ENCODE measurements at regions of chr9 and their contacts with region 1.

Region 1: GRCh38 chr9:87148331-87149104 is 201.2 kb upstream of the GAS1 start:
- DNase-seq: peak; percentile 93
- ATAC-seq: peak; percentile 97

Region 2: DNA sequence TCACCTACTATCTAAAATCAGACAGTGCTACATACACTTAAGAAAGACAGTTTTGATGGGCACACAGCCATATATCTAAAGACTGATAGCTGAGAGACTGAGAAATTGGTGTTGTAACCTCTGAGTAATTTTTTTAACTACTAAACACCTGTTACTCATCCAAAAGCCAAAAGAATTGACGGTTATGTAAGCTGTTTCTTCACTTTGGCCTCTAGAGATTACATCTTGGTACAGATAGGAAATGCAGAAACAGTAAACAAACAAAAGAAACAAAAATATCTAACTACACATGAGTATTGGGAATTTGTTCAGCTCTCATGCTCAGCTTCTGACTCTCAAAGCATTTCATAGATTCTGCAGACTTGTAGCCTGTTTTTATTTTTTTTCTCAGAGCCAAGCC is 49.1 kb before region 1 on chr9:
- intact Hi-C with region 1: loop called (anchors 10 kb)
- DNase-seq: no peak
- ATAC-seq: peak; percentile 25

Measured in Right ventricle myocardium superior (tissue), 1 donor.